ENCODE measurements at regions of chr4 and their contacts with region 1.

Region 1: GRCh38 chr4:159946983-159947615 is 844.2 kb downstream of the RAPGEF2 start:
- DNase-seq: peak; percentile 72
- ATAC-seq: peak; percentile 49; the same call in 1 of the 2 replicates
- H3K4me3 ChIP-seq: no peak overlapping the region
- H3K27ac ChIP-seq: no peak overlapping the region
- H3K4me1 ChIP-seq: no peaks in the 10 kb centered on the region
- H3K27me3 ChIP-seq: no peaks in the 10 kb centered on the region
- CTCF ChIP-seq: peak; percentile 72

Region 2: DNA sequence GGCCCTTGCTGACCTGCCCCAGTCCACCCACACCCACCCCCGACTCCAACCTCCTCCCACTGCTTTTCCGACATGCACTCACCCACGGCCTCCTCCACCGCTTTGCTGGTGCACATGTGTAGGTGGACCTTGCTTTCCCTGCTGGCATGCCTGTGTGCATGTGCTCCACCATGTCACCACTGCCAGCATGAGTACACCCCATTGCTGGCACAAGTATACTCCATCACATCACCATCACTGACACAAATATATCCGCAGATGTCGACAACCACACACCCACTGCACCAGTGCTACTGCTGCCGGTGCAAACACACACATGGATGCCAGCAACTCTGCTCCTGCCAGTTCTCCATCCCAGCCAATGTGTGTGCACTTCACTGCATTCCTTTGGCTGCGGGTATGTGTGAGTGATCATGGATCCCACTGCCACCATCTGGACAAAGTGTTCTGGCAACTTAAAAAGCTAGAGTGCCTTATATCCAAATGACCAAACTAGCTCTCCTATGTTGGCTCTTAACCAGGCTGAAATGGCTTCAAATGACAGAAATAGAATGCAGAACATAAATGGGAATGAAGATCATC is 228.1 kb after region 1 on chr4:
- CTCF ChIA-PET with region 1: no interaction called
- POLR2A ChIA-PET with region 1: no interaction called
- intact Hi-C with region 1: loop called (anchors 10 kb)
- DNase-seq: peak; percentile 20
- ATAC-seq: peak; percentile 48
- H3K4me3 ChIP-seq: no peak overlapping the region
- H3K27ac ChIP-seq: no peak overlapping the region
- H3K4me1 ChIP-seq: 0 out of 2 replicates have a peak, but pooled peaks cover 2% of the 10 kb centered on the region
- H3K27me3 ChIP-seq: no peaks in the 10 kb centered on the region
- CTCF ChIP-seq: peak; percentile 12; the same call in 1 of the 2 replicates

Measured in PC-3 (cell line).